Right lobe of liver (tissue), 6 donors: ENCODE measurements at regions of chr6 and their contacts with region 1.

Region 1: GRCh38 chr6:31139599-31139998 is 733 bp upstream of the PSORS1C2 start:
- DNase-seq: no peak
- ATAC-seq: peak in 1 of 4 donors; percentile 22
- H3K4me3 ChIP-seq: no peak overlapping the region
- H3K27ac ChIP-seq: no peak overlapping the region
- H3K4me1 ChIP-seq: no peaks in the 10 kb centered on the region
- H3K27me3 ChIP-seq: no peaks in the 10 kb centered on the region
- CTCF ChIP-seq: no peak
- POLR2A ChIP-seq: no peak

Region 2: DNA sequence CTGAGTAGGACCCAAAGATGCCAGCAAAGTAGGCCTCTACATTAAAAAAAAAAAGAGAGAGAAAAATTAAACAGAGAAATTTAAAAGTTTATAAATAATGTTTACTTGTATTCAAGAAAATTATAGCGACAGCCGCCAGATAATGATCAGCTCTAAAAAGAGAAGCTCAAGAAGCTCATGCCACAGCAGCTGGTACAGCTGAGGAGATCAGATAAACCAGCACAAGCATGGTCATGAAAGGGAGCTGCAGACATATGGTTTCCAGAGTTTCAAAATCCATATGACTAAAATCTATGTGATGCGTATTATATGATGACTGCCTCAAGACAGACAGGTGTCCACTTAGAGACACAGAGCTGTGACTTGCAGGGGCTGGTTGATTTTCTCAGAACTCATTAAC is 145.9 kb after region 1 on chr6:
- intact Hi-C with region 1: no loop called
- DNase-seq: no peak
- ATAC-seq: no peak
- H3K4me3 ChIP-seq: no peak overlapping the region
- H3K27ac ChIP-seq: no peak overlapping the region
- H3K4me1 ChIP-seq: no peaks in the 10 kb centered on the region
- H3K27me3 ChIP-seq: no peaks in the 10 kb centered on the region
- CTCF ChIP-seq: no peak
- POLR2A ChIP-seq: no peak

Region 3: DNA sequence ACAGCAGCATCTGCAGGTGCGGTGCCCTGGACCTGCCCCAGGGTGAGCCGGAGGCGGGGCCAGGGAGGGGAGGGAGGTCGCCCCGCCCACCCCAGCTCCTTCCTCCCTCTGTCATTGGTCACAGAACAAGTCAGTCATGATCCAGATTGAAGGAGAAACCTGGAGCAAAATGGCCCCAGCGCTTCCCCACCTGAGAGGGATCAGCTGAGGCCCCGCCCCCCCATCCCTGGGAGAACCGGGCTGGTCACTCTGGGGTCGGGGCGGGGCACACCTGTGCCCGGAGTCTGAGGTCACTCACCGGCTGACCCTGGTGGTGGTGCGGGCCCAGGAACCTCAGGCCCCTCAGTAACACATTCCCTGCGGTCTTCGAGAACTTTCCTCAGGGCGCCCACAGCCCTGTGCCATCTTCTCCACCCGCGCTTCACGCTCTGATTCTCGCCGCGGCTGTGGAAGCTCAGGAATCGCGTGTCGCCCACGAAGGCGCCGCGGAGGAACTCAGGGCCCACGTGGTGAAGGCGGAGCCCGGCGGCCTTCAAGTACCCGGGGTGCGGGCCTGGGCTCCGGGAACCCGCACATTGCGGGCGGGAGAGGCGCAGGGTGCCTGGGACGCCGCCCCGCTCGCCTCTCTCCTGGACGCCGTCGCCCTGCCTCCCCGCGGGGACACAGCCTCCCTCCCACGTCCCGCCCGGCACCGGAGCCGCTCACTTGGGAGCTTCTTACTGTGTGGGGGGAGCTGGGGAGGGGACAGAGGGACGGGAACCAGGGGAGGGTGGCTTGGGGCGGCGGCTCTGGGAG is 168.6 kb after region 1 on chr6:
- intact Hi-C with region 1: no loop called
- DNase-seq: peak in 2 of 3 donors; percentile 29 to 57
- ATAC-seq: peak; percentile 59 to 80 (median 76)
- H3K4me3 ChIP-seq: peak overlapping the region; percentile 13 to 28 (median 18)
- H3K27ac ChIP-seq: no peak overlapping the region
- H3K4me1 ChIP-seq: no peaks in the 10 kb centered on the region
- H3K27me3 ChIP-seq: peaks cover 0 to 14% of the 10 kb centered on the region in 2 donors
- CTCF ChIP-seq: no peak
- POLR2A ChIP-seq: no peak

Region 4: GRCh38 chr6:31379850-31380249 is 240.3 kb after region 1 on chr6:
- intact Hi-C with region 1: loop called (anchors 5 to 10 kb)
- DNase-seq: no peak
- ATAC-seq: no peak
- H3K4me3 ChIP-seq: no peak overlapping the region
- H3K27ac ChIP-seq: no peak overlapping the region
- H3K4me1 ChIP-seq: no peaks in the 10 kb centered on the region
- H3K27me3 ChIP-seq: no peaks in the 10 kb centered on the region
- CTCF ChIP-seq: no peak
- POLR2A ChIP-seq: no peak